Mammary epithelial cell (primary cell): ENCODE measurements at regions of chr9 and their contacts with region 1.

Region 1: GRCh38 chr9:122991370-122991830 is 42.1 kb upstream of the GPR21 start:
- DNase-seq: peak; percentile 89
- H3K4me3 ChIP-seq: no peak overlapping the region
- H3K27ac ChIP-seq: peak overlapping the region; percentile 34
- H3K4me1 ChIP-seq: peaks cover 6% of the 10 kb centered on the region
- H3K27me3 ChIP-seq: no peaks in the 10 kb centered on the region
- CTCF ChIP-seq: peak; percentile 66 to 72

Region 2: GRCh38 chr9:122827761-122828093 is 163.7 kb before region 1 on chr9:
- CTCF ChIA-PET with region 1: interaction called, 6 read pairs
- dilution Hi-C with region 1: no loop called
- in situ Hi-C with region 1: no loop called
- intact Hi-C with region 1: loop called (anchors 10 kb)
- DNase-seq: no peak
- H3K4me3 ChIP-seq: peak overlapping the region; percentile 77 to 97 (median 79)
- H3K27ac ChIP-seq: peak overlapping the region; percentile 57
- H3K4me1 ChIP-seq: peaks cover 9% of the 10 kb centered on the region
- H3K27me3 ChIP-seq: no peaks in the 10 kb centered on the region
- CTCF ChIP-seq: no peak

Region 3: GRCh38 chr9:122897969-122898368 is 93.4 kb before region 1 on chr9:
- CTCF ChIA-PET with region 1: interaction called, 26 read pairs
- dilution Hi-C with region 1: no loop called
- in situ Hi-C with region 1: no loop called
- intact Hi-C with region 1: loop called (anchors 1 kb)
- DNase-seq: peak; percentile 49
- H3K4me3 ChIP-seq: no peak overlapping the region
- H3K27ac ChIP-seq: peak overlapping the region; percentile 9
- H3K4me1 ChIP-seq: peaks cover 16% of the 10 kb centered on the region
- H3K27me3 ChIP-seq: no peaks in the 10 kb centered on the region
- CTCF ChIP-seq: no peak

Region 4: GRCh38 chr9:122912964-122913673 is 78.3 kb before region 1 on chr9 and contains the start of gene ZBTB6:
- CTCF ChIA-PET with region 1: interaction called, 14 read pairs
- dilution Hi-C with region 1: no loop called
- in situ Hi-C with region 1: no loop called
- intact Hi-C with region 1: loop called (anchors 1 kb)
- DNase-seq: peak; percentile 87
- H3K4me3 ChIP-seq: peak within 1 kb of the TSS; percentile 67 to 84 (median 81)
- H3K27ac ChIP-seq: peak within 1 kb of the TSS; percentile 76
- H3K4me1 ChIP-seq: peaks cover 9% of the 10 kb centered on the region
- H3K27me3 ChIP-seq: no peaks in the 10 kb centered on the region
- CTCF ChIP-seq: no peak
- total RNA-seq, gene ZBTB6: 8.2 to 18.3 TPM

Region 5: GRCh38 chr9:123033864-123034601 is 42.6 kb after region 1 on chr9:
- CTCF ChIA-PET with region 1: no interaction called
- dilution Hi-C with region 1: no loop called
- in situ Hi-C with region 1: no loop called
- intact Hi-C with region 1: no loop called
- DNase-seq: no peak
- H3K4me3 ChIP-seq: no peak overlapping the region
- H3K27ac ChIP-seq: no peak overlapping the region
- H3K4me1 ChIP-seq: no peaks in the 10 kb centered on the region
- H3K27me3 ChIP-seq: no peaks in the 10 kb centered on the region
- CTCF ChIP-seq: no peak

Region 6: GRCh38 chr9:123343443-123344191 is 352.2 kb after region 1 on chr9:
- CTCF ChIA-PET with region 1: interaction called, 11 read pairs
- dilution Hi-C with region 1: no loop called
- in situ Hi-C with region 1: no loop called
- intact Hi-C with region 1: no loop called
- DNase-seq: peak; percentile 39
- H3K4me3 ChIP-seq: no peak overlapping the region
- H3K27ac ChIP-seq: no peak overlapping the region
- H3K4me1 ChIP-seq: peaks cover 17% of the 10 kb centered on the region
- H3K27me3 ChIP-seq: no peaks in the 10 kb centered on the region
- CTCF ChIP-seq: no peak